Right ventricle myocardium inferior (tissue), 1 donor: ENCODE measurements at regions of chr3 and their contacts with region 1.

Region 1: GRCh38 chr3:158644345-158644908 is at the start of gene GFM1:
- DNase-seq: peak; percentile 96
- ATAC-seq: peak; percentile 97
- total RNA-seq, gene GFM1: 60.1 TPM

Region 2: DNA sequence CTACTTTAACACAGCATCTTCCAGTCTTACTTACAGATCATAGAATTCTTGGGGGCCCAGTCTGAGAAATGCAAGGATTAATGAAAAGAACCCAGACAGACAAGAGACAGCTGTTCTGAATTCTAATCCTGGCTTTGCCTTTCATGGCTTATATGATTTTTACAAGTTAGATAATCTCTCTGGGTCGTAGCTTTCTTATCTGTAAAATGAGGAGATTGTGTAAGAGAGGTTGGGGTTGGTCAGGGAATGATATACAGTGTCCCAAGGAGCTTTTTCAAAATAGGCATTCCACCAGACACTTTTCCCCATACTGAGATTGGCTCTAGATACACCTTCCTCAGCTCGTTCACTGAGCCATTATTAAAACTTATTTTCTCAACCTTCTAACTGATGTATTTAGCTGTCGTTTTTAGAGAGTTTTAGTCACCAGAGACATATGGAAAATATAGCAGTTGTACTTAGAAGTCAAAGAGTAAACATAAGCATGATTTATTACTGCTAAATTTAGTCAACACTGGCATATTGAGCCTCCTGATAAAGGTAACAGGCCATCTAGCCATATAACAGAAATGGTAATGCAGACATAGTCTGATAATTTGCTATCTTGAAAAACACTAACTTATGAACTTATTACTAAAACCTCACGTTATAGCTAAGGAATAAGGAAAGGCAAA is 236.4 kb before region 1 on chr3:
- intact Hi-C with region 1: no loop called
- DNase-seq: no peak
- ATAC-seq: no peak

Region 3: GRCh38 chr3:158505117-158505516 is 139.3 kb before region 1 on chr3:
- intact Hi-C with region 1: no loop called
- DNase-seq: no peak
- ATAC-seq: peak; percentile 39

Region 4: GRCh38 chr3:158539414-158540014 is 104.9 kb before region 1 on chr3:
- intact Hi-C with region 1: loop called (anchors 5 kb)
- DNase-seq: no peak
- ATAC-seq: no peak

Region 5: DNA sequence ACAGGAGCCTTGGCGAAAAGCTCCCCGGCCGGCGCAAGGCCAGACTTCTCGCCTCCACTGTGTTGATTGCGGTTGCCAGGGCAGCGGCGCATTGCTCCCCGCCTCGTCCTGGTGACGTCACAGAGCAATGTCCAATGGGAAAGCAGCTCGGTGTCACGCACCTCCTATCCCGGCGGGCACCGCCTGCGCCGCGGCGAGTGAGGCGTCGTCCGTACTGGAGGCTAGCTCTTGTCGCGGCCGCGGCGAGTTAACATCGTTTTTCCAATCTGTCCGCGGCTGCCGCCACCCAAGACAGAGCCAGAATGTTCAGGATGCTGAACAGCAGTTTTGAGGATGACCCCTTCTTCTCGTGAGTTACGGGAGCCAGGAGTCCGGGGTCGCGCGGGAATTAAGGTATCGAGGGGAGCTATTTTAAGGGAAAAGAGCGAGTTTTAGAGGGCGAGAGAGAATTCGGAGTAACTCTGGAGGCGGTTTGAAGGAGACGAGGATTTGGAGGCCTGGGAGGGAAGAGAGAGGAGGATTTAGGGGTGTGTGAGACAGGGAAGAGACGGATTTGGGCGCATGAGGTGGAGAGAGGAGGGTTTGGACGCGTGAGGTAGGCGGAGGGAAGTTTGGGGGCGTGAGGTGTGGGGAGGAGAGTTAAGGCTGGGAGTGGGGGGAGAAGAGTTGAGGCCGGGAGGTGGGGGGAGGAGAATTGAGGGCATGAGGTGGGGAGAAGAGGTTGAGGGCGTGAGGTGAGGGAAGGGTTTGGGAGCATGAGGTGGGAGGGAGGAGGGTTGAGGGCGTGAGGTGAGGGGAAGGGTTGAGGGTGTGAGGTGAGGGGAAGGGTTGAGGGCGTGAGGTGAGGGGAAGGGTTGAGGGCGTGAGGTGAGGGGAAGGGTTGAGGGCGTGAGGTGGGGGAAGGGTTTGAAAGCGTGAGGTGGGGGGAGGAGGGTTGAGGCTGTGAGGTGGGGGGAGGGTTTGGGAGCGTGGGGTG is 73.1 kb before region 1 on chr3 and contains the start of gene MLF1:
- intact Hi-C with region 1: loop called (anchors 5 kb)
- DNase-seq: peak; percentile 96
- ATAC-seq: peak; percentile 99
- total RNA-seq, gene MLF1: 191 TPM

Region 6: GRCh38 chr3:158801696-158802408 is 157.4 kb after region 1 on chr3 and contains the start of gene MFSD1:
- intact Hi-C with region 1: loop called (anchors 5 kb)
- DNase-seq: peak; percentile 99
- ATAC-seq: peak; percentile 99
- total RNA-seq, gene MFSD1: 32.2 TPM